ENCODE measurements at regions of chr14 and their contacts with region 1.

Region 1: GRCh38 chr14:61269321-61270083 is 11.6 kb downstream of the TMEM30B start:
- DNase-seq: peak; percentile 37
- ATAC-seq: peak; percentile 79
- H3K4me3 Mint-ChIP-seq: peak overlapping the region; percentile 50
- H3K27ac Mint-ChIP-seq: no peak overlapping the region
- H3K4me1 Mint-ChIP-seq: peaks cover 2% of the 10 kb centered on the region
- H3K27me3 Mint-ChIP-seq: peaks cover 51% of the 10 kb centered on the region
- CTCF ChIP-seq: peak; percentile 93

Region 2: GRCh38 chr14:61281186-61281947 is 11.9 kb after region 1 on chr14 and contains the start of gene TMEM30B:
- CTCF ChIA-PET with region 1: interaction called, 4 read pairs
- POLR2A ChIA-PET with region 1: no interaction called
- intact Hi-C with region 1: loop called (anchors 1 kb)
- DNase-seq: no peak
- ATAC-seq: no peak
- H3K4me3 Mint-ChIP-seq: peak within 1 kb of the TSS; percentile 80
- H3K27ac Mint-ChIP-seq: no peak within 1 kb of the TSS
- H3K4me1 Mint-ChIP-seq: peaks cover 13% of the 10 kb centered on the region
- H3K27me3 Mint-ChIP-seq: peaks cover 38% of the 10 kb centered on the region
- CTCF ChIP-seq: no peak
- total RNA-seq, gene TMEM30B: not detected in 2 replicates

Measured in activated B cell treated with CpG ODN at 0.5 μM for 24 hours (primary cell).